Activated CD4-positive, alpha-beta T cell treated with anti-CD3 and anti-CD28 coated beads, Interleukin-2, amount 10 ng/mL, durations not matched to agents 24 days and 14 days (primary cell): ENCODE measurements at regions of chr19 and their contacts with region 1.

Region 1: DNA sequence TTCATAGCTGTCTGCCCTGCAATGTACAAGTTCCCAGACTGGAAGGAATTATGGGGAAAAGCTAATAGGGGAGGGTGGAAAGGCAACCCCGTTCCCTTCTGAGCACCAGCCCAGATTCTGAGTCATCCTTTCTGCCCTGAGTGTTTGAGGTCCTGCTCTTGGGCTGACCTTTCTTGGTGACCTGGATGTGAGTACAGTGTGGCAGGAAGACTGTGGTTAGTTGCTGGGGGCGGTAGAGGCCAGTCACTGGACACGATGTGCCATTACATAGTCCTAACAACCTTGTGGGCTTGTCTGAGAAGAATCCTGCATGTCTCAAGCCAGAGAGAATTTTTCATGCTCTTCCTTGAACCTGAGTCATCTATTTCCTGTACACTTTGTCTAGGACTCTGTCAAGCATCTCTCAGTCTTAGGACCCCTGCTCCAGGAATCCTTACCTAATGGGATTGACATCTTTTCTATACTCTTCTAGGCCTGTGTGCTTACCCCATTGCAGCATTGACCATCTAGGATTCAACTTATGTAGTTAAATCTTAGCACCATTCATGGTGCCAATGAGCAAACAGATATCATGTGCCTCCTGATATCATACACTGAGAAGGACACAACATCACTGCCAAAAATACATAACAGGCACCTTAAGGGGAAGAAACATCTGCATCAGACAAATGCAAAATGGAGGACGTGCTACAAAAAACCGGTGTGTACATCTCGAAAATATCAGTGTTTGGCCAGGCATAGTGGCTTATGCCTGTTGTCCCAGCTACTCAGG is 8.1 kb upstream of the ANGPTL4 start:
- DNase-seq: no peak
- H3K4me3 Mint-ChIP-seq: no peak overlapping the region
- H3K27ac Mint-ChIP-seq: no peak overlapping the region
- H3K4me1 Mint-ChIP-seq: peaks cover 13% of the 10 kb centered on the region
- H3K27me3 Mint-ChIP-seq: peaks cover 15% of the 10 kb centered on the region

Region 2: GRCh38 chr19:8396563-8397203 is 40.9 kb after region 1 on chr19:
- intact Hi-C with region 1: loop called (anchors 1 kb)
- DNase-seq: peak; percentile 91
- H3K4me3 Mint-ChIP-seq: no peak overlapping the region
- H3K27ac Mint-ChIP-seq: no peak overlapping the region
- H3K4me1 Mint-ChIP-seq: peaks cover 16% of the 10 kb centered on the region
- H3K27me3 Mint-ChIP-seq: no peaks in the 10 kb centered on the region

Region 3: DNA sequence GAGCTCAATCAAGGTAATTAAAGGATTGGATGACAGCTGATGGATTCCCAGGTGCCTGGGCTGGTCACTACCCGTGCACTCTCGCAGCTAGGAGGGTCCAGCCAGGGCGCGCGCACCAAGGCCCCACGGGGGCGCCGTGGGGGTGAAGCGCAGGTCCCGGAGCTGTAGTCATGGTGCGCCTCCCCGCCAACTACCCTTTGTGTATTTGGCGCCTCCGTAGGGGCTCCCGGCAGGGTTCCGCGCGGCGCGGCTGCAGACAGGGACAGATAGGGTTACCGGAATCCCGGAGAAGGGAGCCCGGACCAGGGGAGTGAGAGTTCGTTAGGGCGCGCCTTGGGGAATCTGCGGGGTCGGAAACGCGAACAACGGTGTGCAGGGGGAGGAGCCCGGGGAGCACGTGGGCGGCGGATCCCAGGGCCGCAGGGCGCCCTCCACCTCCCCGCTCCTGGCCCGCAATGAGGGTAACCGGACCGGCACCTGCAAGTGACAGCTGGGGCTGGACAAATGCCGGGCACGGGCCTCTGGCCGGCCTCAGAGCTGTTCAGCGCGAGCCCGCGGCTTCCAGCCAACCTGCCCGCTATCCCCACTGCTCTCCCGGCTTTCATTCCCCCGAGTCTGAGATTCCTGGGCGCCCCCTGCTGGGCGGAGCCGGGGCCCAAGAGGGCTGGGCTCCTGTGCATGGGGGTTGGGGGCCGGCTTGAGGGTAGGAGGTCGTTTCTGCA is 150.0 kb after region 1 on chr19:
- intact Hi-C with region 1: loop called (anchors 5 kb)
- DNase-seq: peak; percentile 91
- H3K4me3 Mint-ChIP-seq: peak overlapping the region; percentile 93
- H3K27ac Mint-ChIP-seq: peak overlapping the region; percentile 83
- H3K4me1 Mint-ChIP-seq: peaks cover 12% of the 10 kb centered on the region
- H3K27me3 Mint-ChIP-seq: no peaks in the 10 kb centered on the region

Region 4: GRCh38 chr19:8517551-8518442 is 162.0 kb after region 1 on chr19:
- intact Hi-C with region 1: no loop called
- DNase-seq: peak; percentile 88
- H3K4me3 Mint-ChIP-seq: peak overlapping the region; percentile 69
- H3K27ac Mint-ChIP-seq: peak overlapping the region; percentile 93
- H3K4me1 Mint-ChIP-seq: peaks cover 40% of the 10 kb centered on the region
- H3K27me3 Mint-ChIP-seq: no peaks in the 10 kb centered on the region